CD8-positive, alpha-beta memory T cell (primary cell): ENCODE measurements at regions of chr15 and their contacts with region 1.

Region 1: DNA sequence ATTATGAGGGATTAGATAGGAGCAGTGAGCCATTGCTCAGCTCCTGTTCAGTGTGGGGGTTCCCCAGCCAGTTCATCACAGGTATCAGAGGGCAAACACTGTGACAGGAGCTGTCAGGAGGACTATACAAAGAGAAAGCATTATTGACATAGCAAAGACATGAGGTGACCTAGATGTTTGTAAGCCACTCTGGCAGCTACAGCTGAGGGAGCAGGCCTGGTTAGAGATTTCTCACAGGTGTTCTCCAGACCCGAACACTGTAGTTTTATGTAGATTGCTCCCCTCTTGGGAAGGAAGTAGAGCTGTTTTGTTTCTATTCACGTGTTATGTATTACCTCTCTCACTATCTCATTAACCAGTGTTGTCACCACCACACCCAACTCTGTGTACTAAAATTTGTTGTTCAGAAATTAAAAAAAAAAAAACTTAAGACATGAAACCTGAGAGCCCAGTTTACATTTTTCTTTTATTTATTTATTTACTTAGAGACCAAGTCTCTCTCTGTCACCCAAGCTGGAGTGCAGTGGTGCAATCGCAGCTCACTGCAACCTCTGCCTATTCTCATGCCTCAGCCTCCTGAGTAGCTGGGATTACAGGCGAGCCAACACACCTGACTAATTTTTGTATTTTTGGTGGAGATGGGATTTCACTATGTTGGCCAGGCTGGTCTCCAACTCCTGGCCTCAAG is 123.7 kb downstream of the RBPMS2 start:
- DNase-seq: peak; percentile 10 to 65 (median 37)
- H3K4me3 ChIP-seq: no peak overlapping the region
- H3K4me3 Mint-ChIP-seq: peak overlapping the region in 6 of 7 donors; percentile 49 to 72 (median 59)
- H3K27ac ChIP-seq: no peak overlapping the region
- H3K27ac Mint-ChIP-seq: peak overlapping the region; percentile 75 to 95 (median 91)
- H3K4me1 ChIP-seq: peaks cover 41% of the 10 kb centered on the region
- H3K4me1 Mint-ChIP-seq: peaks cover 38 to 66% (median 47%) of the 10 kb centered on the region in 3 donors
- H3K27me3 ChIP-seq: no peaks in the 10 kb centered on the region
- H3K27me3 Mint-ChIP-seq: no peaks in the 10 kb centered on the region

Region 2: DNA sequence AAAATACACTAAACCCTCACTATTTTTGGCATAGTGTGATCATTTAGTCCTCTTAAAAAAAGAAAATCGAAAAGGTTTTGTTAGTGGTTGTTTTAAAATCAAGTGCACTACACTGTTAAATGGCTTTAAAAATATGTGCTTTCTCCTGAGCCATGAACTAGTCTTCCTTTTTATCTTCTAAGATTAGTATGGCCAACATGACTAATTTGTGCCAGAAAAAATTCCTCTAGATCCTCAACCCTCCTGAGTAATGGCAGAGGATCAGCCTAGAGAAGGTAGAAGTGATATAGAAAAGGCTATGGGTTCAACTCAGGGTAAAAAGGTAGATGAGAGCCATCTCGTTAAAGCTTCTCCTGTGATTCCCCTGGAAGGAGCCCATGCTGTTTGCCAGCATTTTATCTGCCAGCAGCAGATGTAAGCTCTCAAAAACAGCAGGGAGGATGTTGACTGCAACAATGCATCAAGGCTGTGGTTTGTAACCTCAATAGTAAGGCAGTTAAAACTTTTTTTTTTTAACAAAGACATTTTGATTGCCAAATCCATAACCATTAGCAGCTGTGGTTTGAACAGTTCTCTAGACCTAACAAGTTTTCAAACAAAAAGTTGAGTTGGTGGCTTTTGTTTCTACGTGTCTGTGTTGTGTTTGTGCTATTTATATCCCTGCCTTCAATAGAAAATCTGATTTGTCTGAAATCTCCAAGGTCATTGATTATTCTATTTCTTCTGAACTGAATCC is 221.5 kb before region 1 on chr15:
- CTCF ChIA-PET with region 1: interaction called, 37 read pairs
- POLR2A ChIA-PET with region 1: interaction called, 3 read pairs
- DNase-seq: peak; percentile 1 to 82 (median 72)
- H3K4me3 ChIP-seq: peak overlapping the region; percentile 38
- H3K4me3 Mint-ChIP-seq: peak overlapping the region; percentile 17 to 86 (median 79)
- H3K27ac ChIP-seq: no peak overlapping the region
- H3K27ac Mint-ChIP-seq: peak overlapping the region; percentile 76 to 97 (median 92)
- H3K4me1 ChIP-seq: peaks cover 48% of the 10 kb centered on the region
- H3K4me1 Mint-ChIP-seq: peaks cover 37 to 47% (median 40%) of the 10 kb centered on the region in 3 donors
- H3K27me3 ChIP-seq: no peaks in the 10 kb centered on the region
- H3K27me3 Mint-ChIP-seq: no peaks in the 10 kb centered on the region

Region 3: DNA sequence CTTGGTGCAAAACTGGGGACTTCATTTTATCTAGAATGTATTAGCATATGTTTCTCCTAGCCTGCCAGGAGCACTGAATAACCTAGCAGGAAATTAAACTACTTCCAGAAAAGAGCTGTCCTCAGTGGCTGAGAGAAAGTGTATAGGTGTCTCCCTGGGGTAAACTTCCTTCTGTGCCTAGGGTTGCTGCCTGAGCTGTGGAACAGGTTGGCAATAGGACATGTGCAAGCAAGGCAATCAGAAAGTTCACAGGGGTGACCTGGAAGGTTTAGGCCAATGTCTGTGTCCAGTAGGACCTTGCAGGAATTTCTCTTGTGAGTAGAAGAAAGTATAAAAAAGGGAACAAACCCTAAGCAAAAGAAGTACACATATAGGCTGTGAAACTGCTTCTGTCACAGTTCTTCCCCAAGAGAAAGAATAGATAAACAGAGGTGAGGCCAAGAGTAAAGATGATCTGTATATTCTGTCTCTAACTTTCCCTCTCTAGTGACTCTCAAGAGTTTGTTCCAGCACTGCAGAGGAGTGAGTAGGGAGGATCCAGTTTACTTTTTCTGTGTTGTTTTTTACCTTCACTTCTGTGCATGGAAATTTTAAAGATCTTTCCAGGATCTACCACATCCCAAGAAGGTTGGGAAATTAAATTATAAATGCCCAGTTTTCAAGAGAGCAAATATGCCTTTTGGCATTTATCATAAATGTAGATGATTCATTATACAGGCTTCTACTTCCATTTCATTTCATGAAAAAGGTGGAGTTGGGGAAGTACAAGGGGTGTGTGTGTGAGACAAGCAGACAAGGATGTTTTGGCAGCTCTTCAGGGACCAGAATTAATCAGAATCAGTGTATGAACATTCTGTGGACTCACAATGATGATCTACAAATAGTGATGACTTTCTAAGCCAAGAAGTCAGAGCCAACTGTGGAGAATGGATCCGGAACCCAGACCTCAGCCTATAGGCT is 31.6 kb before region 1 on chr15:
- CTCF ChIA-PET with region 1: interaction called, 18 read pairs
- POLR2A ChIA-PET with region 1: interaction called, 6 read pairs
- DNase-seq: no peak
- H3K4me3 ChIP-seq: no peak overlapping the region
- H3K4me3 Mint-ChIP-seq: peak overlapping the region in 6 of 7 donors; percentile 19 to 72 (median 47)
- H3K27ac ChIP-seq: no peak overlapping the region
- H3K27ac Mint-ChIP-seq: peak overlapping the region in 7 of 8 donors; percentile 49 to 90 (median 80)
- H3K4me1 ChIP-seq: peaks cover 81% of the 10 kb centered on the region
- H3K4me1 Mint-ChIP-seq: peaks cover 81 to 88% (median 88%) of the 10 kb centered on the region in 3 donors
- H3K27me3 ChIP-seq: no peaks in the 10 kb centered on the region
- H3K27me3 Mint-ChIP-seq: no peaks in the 10 kb centered on the region

Region 4: DNA sequence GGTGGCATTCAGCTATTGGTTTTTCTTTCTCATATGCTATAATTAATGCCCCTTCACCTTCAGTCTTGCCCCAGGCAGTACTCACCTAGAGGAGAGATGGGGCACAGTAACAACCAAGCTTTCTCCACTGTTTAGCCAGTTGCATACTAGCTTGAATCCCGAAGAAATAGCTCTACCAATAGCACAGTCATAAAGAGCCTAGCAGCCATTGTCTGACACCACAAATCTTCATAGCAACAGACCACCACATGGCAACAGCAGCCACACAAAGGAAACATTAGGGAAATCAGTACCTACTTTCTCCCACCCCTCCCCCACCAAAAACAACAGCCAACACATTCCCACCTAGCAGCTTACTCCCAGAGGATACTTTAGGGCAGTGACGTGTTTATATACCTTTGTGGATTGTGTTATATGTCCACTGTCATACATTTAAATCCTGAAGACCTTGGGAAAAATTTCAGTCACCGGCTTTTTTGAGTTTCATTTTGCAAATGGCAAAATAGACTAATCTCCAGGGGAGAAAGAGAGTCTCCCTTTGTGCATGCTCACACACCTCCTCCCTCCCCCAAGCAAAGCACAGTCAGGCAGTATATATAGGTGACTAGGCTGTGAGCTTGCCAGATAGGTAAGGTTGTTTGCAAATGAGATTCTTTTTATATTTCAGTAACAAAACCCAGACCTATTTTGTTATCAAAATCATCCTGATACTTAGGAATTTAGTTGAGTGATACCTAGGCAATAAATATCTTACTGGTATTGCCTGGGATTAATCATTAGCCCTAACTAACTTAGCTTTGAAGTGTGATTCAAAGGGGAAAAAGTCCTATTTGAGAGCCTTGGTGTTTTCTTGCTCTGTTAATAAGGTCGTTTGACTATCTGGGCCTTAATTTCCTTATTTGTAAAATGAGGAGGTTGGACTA is 16.9 kb before region 1 on chr15:
- CTCF ChIA-PET with region 1: interaction called, 14 read pairs
- POLR2A ChIA-PET with region 1: interaction called, 14 read pairs
- DNase-seq: peak in 4 of 5 donors; percentile 3 to 69 (median 45)
- H3K4me3 ChIP-seq: peak overlapping the region; percentile 35
- H3K4me3 Mint-ChIP-seq: peak overlapping the region; percentile 34 to 81 (median 72)
- H3K27ac ChIP-seq: peak overlapping the region; percentile 55
- H3K27ac Mint-ChIP-seq: peak overlapping the region; percentile 76 to 96 (median 92)
- H3K4me1 ChIP-seq: peaks cover 48% of the 10 kb centered on the region
- H3K4me1 Mint-ChIP-seq: peaks cover 52 to 86% (median 79%) of the 10 kb centered on the region in 3 donors
- H3K27me3 ChIP-seq: no peaks in the 10 kb centered on the region
- H3K27me3 Mint-ChIP-seq: no peaks in the 10 kb centered on the region

Region 5: GRCh38 chr15:64686216-64686631 is 34.5 kb after region 1 on chr15:
- CTCF ChIA-PET with region 1: no interaction called
- POLR2A ChIA-PET with region 1: no interaction called
- DNase-seq: peak in 3 of 5 donors; percentile 7 to 29 (median 23)
- H3K4me3 ChIP-seq: no peak overlapping the region
- H3K4me3 Mint-ChIP-seq: no peak overlapping the region
- H3K27ac ChIP-seq: no peak overlapping the region
- H3K27ac Mint-ChIP-seq: peak overlapping the region in 3 of 8 donors; percentile 1 to 47 (median 34)
- H3K4me1 ChIP-seq: no peaks in the 10 kb centered on the region
- H3K4me1 Mint-ChIP-seq: peaks cover 0 to 5% (median 3%) of the 10 kb centered on the region in 3 donors
- H3K27me3 ChIP-seq: no peaks in the 10 kb centered on the region
- H3K27me3 Mint-ChIP-seq: no peaks in the 10 kb centered on the region

Region 6: DNA sequence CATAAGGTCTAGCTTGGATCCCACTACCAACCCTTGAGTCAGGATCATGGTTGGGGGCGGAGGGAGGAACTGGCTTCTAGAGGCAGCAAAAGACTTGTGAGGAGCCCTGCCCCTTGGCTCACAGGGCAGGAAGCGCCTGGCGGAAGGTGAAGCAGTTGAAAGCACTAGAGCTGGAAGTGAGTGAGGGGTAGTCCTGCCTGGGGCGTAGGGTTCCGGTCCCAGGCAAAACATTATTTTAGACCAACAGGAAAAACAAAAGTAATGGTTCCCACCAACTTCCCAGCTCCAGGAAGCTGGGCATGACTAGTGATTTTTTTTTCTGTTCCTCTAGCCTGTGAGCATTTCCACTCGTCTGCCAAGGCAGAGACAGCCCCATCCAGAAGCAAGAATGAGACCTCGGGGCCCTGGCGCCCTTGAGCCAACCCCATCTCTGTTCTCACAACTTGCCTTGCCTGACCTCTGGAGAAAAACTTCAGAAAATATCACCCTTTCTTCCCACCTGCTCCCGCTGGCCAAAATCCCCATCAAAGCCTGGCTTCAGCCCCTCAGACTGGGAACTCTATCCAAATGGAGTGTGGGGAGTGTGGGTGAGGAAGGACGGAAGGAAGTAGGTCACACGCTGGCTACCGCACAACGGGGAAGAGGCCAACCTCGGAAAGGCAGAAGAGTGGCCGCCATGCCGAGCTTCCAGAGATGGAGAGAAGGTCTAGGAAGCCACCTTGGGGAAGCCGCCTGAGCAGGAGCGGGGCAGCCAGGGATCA is 66.2 kb after region 1 on chr15:
- CTCF ChIA-PET with region 1: no interaction called
- POLR2A ChIA-PET with region 1: no interaction called
- DNase-seq: peak in 1 of 5 donors; percentile 27
- H3K4me3 ChIP-seq: no peak overlapping the region
- H3K4me3 Mint-ChIP-seq: no peak overlapping the region
- H3K27ac ChIP-seq: no peak overlapping the region
- H3K27ac Mint-ChIP-seq: peak overlapping the region in 1 of 8 donors; percentile 38
- H3K4me1 ChIP-seq: peaks cover 15% of the 10 kb centered on the region
- H3K4me1 Mint-ChIP-seq: peaks cover 0 to 13% (median 0%) of the 10 kb centered on the region in 3 donors
- H3K27me3 ChIP-seq: no peaks in the 10 kb centered on the region
- H3K27me3 Mint-ChIP-seq: no peaks in the 10 kb centered on the region